Brain microvascular endothelial cell (primary cell): ENCODE measurements at regions of chr5 and their contacts with region 1.

Region 1: DNA sequence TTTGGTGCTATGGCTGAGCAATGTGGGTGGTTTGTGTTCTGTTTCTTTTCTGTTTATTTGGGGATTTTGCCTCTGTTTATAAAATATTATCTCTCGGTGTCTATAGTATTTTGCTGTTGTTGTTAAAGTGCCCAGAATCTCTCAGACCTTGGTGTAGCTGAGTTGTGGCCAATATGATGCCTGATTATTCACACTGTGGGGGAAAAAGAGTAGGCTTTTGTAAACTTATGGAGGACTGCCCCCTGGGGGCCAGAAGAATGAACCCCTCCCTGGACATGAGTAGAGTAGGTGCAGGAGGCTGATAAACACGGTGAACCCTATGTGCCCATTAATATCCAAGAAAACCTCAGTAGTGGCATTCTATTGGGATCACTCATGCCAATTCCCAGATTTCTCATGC is 49.0 kb upstream of the DPYSL3 start:
- DNase-seq: peak; percentile 68
- H3K4me3 ChIP-seq: no peak overlapping the region
- H3K27ac ChIP-seq: no peak overlapping the region
- H3K27me3 ChIP-seq: no peaks in the 10 kb centered on the region
- CTCF ChIP-seq: peak; percentile 87

Region 2: DNA sequence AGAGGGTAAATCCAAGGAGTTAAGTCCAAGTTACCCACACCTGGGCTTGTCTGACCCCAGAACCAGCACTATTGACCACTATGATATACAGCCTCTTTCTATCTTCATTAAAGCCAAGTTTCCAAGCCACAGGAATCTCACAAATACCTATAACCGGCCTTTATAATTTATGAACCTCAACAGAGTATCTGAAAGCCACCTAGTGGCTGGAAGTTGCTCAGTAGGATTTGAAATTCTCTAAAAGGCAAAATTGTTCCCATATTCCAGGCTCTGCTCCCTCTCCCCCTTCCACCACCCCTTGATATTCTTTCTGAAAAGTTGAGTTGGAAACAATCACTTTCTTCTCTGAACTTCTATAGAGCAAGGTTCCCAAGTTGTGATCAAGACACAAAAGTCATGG is 936.4 kb before region 1 on chr5:
- in situ Hi-C with region 1: no loop called
- DNase-seq: no peak
- H3K4me3 ChIP-seq: no peak overlapping the region
- H3K27ac ChIP-seq: no peak overlapping the region
- H3K27me3 ChIP-seq: no peaks in the 10 kb centered on the region
- CTCF ChIP-seq: peak; percentile 58

Region 3: DNA sequence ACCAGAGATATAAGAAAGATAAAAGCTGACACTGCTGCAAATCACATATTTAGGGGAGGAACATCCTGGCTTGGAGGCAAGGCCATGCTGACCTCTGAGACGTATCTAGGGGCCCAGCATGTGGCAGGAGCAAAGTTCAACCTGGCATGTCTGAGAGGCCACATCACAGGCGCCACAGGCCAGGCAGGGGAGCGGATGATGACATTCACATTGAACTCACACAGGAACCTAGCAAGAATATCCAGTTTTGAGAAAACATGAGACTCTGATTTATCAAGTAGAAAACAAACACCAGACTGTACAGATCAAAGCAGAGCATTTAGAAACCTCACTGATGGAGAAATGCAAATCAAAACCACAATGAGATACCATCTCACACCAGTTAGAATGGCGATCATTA is 388.2 kb before region 1 on chr5:
- in situ Hi-C with region 1: no loop called
- DNase-seq: no peak
- H3K4me3 ChIP-seq: no peak overlapping the region
- H3K27ac ChIP-seq: no peak overlapping the region
- H3K27me3 ChIP-seq: no peaks in the 10 kb centered on the region
- CTCF ChIP-seq: no peak

Region 4: GRCh38 chr5:147453875-147454814 is 104.7 kb before region 1 on chr5:
- in situ Hi-C with region 1: loop called (anchors 25 kb)
- DNase-seq: peak; percentile 51
- H3K4me3 ChIP-seq: peak overlapping the region; percentile 77
- H3K27ac ChIP-seq: peak overlapping the region; percentile 33
- H3K27me3 ChIP-seq: peaks cover 3% of the 10 kb centered on the region
- CTCF ChIP-seq: peak; percentile 87

Region 5: DNA sequence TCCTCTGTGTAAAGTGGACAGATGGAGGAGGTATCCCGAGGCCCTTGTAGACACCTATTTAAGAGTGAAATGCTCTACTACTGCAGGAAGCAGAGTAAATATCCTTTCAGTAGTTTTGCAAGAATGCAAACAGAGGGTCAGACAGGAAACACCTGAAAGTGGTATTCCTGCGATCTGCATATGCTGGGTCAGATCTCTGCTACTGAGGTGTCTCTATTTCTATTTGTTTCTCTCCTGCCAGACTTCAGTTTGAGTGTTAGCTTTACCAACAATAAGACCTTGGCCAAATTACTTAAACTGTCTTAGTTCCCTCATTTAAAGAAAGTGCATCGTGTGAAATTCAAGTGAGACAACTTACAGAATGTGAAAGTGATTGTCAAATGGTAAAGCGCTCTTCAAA is 176.1 kb after region 1 on chr5:
- in situ Hi-C with region 1: no loop called
- DNase-seq: no peak
- H3K4me3 ChIP-seq: no peak overlapping the region
- H3K27ac ChIP-seq: no peak overlapping the region
- H3K27me3 ChIP-seq: no peaks in the 10 kb centered on the region
- CTCF ChIP-seq: no peak